Heart left ventricle (tissue), 16 donors: ENCODE measurements at regions of chr16 and their contacts with region 1.

Region 1: DNA sequence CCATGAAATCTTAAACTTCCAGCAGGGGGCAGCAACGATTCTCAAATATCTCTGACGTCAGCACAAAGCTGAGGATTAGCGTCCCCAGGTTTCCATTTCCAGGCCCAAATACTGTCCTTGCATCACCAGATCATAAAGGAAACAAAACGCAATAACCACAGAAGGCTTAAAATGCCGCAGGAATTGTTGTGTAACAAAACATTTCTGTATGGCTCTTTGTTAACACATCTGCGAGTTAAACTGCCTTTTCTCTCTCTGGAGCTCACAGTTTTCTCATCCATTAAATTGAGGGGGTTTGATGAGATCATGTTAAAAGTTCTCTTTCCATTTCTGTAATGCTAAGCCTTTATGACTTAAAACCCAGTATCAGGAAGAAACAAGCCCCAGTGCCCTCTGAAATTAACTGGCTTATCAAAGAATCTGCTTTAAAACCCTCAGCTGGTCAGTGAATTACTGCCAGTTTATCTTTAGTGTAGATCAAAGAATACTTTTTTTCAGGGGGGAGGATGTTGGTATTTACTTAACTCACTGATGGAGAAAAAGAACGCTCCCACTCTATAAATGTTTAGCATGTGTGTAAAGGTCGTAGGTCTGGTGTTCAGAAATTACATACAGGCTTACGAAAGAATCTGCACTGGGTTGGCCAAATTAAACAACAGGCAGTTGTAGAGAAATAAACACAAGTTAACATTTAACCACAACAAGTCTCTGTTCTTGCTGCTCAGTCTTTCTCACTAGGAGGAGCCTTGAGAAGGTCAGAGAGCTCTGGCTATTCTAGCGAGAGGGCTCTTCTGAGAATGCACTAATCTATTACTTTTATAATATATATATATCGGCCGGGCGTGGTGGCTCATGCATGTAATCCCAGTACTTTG is 10.6 kb upstream of the TERF2 start:
- DNase-seq: peak in 3 of 5 donors; percentile 61 to 76 (median 72)
- ATAC-seq: peak; percentile 29 to 55 (median 47)
- H3K4me3 ChIP-seq: no peak overlapping the region
- H3K27ac ChIP-seq: peak overlapping the region in 11 of 12 donors; percentile 47 to 86 (median 68)
- H3K4me1 ChIP-seq: peaks cover 0 to 34% (median 19%) of the 10 kb centered on the region in 12 donors
- H3K27me3 ChIP-seq: no peaks in the 10 kb centered on the region
- CTCF ChIP-seq: peak in 9 of 12 donors; percentile 54 to 83 (median 70)
- POLR2A ChIP-seq: no peak

Region 2: GRCh38 chr16:69424053-69424934 is 27.9 kb after region 1 on chr16 and contains the start of gene CYB5B:
- intact Hi-C with region 1: loop called in 2 of 10 experiments (anchors 2 kb)
- DNase-seq: peak; percentile 91 to 96 (median 95)
- ATAC-seq: peak; percentile 99 to 100 (median 99)
- H3K4me3 ChIP-seq: peak within 1 kb of the TSS; percentile 64 to 91 (median 76)
- H3K27ac ChIP-seq: peak within 1 kb of the TSS; percentile 54 to 86 (median 80)
- H3K4me1 ChIP-seq: peaks cover 0 to 17% (median 11%) of the 10 kb centered on the region in 12 donors
- H3K27me3 ChIP-seq: no peaks in the 10 kb centered on the region
- CTCF ChIP-seq: peak in 1 of 12 donors; percentile 3
- POLR2A ChIP-seq: peak in 1 of 2 donors; percentile 66
- total RNA-seq, gene CYB5B: 31.1 to 89.2 (median 65.0) TPM

Region 3: DNA sequence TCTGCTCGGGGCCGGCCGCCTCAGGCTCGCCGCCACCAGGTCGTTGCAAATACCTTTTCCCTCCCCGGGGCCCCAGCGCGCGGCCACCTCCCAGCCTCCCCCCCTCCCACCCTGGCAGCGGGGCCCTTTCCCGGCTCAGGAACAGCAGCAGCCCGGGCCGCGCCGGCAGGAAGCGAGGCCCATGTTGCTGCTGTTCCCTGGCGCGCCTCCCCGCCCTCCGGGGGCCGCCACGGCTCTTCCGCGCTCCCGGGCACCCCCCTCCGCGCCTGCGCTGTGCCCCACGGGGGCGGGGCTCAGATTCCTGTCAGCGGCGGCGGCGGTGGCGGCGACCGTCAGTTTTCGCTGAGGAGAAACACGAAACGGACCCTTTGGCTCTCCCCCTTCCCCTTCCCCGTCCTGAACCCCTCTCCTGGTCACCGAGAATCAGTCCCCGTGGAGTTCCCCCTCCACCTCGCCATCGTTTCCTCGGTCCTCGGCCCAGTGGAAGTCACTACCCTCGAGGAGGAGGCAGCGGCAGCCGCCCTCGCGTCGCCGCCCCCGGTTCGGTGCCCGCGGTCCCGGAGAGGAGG is 169.3 kb after region 1 on chr16 and contains the start of gene NFAT5:
- intact Hi-C with region 1: loop called in 9 of 10 experiments (anchors 2 to 5 kb)
- DNase-seq: peak; percentile 90 to 95 (median 90)
- ATAC-seq: peak; percentile 84 to 94 (median 90)
- H3K4me3 ChIP-seq: peak within 1 kb of the TSS; percentile 66 to 98 (median 94)
- H3K27ac ChIP-seq: peak within 1 kb of the TSS; percentile 88 to 100 (median 98)
- H3K4me1 ChIP-seq: peaks cover 0 to 55% (median 27%) of the 10 kb centered on the region in 12 donors
- H3K27me3 ChIP-seq: no peaks in the 10 kb centered on the region
- CTCF ChIP-seq: peak in 5 of 12 donors; percentile 17 to 33 (median 25)
- POLR2A ChIP-seq: peak in 1 of 2 donors; percentile 83
- total RNA-seq, gene NFAT5: 13.6 to 30.5 (median 23.9) TPM

Region 4: DNA sequence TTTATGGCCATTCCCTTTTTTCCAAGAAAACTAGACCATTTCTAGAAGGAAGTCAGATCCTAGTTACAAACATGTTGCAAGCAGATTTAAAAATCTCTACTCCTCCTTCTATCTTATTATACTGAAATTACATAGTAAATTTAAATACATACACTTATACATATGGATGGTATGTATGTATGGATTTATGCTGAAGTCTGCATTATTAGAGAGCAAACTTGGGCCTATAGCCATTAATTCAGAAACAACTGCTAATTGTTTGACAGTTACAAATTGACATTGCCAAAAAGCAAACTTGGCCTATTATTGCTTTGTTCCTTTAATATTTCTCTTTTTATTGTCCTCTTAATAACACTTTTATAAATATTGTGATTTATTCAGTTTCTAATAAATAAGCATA is 236.4 kb after region 1 on chr16:
- intact Hi-C with region 1: loop called in 2 of 10 experiments (anchors 10 kb)
- DNase-seq: no peak
- ATAC-seq: no peak
- H3K4me3 ChIP-seq: no peak overlapping the region
- H3K27ac ChIP-seq: no peak overlapping the region
- H3K4me1 ChIP-seq: no peaks in the 10 kb centered on the region
- H3K27me3 ChIP-seq: no peaks in the 10 kb centered on the region
- CTCF ChIP-seq: no peak
- POLR2A ChIP-seq: no peak

Region 5: DNA sequence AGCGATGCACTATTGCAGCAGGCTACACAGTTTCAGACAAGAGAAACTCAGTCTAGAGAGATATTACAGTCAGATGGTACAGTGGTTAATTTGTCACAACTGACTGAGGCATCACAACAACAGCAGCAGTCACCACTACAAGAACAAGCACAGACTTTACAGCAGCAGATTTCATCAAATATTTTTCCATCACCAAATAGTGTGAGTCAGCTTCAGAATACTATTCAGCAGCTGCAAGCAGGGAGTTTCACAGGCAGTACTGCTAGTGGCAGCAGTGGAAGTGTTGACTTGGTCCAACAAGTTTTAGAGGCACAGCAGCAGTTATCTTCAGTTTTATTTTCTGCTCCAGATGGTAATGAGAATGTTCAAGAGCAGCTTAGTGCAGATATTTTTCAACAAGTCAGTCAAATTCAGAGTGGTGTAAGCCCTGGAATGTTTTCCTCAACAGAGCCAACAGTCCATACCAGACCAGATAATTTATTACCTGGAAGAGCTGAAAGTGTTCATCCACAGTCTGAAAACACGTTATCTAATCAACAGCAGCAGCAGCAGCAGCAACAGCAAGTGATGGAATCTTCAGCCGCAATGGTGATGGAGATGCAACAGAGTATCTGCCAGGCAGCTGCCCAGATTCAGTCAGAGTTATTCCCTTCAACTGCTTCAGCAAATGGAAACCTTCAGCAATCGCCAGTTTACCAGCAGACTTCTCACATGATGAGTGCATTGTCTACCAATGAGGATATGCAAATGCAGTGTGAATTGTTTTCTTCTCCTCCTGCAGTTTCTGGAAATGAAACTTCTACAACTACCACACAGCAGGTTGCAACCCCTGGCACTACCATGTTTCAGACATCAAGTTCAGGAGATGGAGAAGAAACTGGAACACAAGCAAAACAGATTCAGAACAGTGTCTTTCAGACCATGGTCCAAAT is 295.8 kb after region 1 on chr16:
- intact Hi-C with region 1: loop called in 1 of 10 experiments (anchors 10 kb)
- DNase-seq: no peak
- ATAC-seq: peak in 3 of 4 donors; percentile 42 to 56 (median 43)
- H3K4me3 ChIP-seq: no peak overlapping the region
- H3K27ac ChIP-seq: no peak overlapping the region
- H3K4me1 ChIP-seq: no peaks in the 10 kb centered on the region
- H3K27me3 ChIP-seq: no peaks in the 10 kb centered on the region
- CTCF ChIP-seq: no peak
- POLR2A ChIP-seq: no peak

Region 6: GRCh38 chr16:69761983-69762813 is 365.8 kb after region 1 on chr16 and contains the start of gene WWP2:
- intact Hi-C with region 1: loop called in 4 of 10 experiments (anchors 5 to 10 kb)
- DNase-seq: peak; percentile 77 to 87 (median 80)
- ATAC-seq: peak; percentile 60 to 89 (median 86)
- H3K4me3 ChIP-seq: peak within 1 kb of the TSS; percentile 74 to 99 (median 90)
- H3K27ac ChIP-seq: peak within 1 kb of the TSS; percentile 67 to 92 (median 86)
- H3K4me1 ChIP-seq: peaks cover 0 to 20% (median 10%) of the 10 kb centered on the region in 12 donors
- H3K27me3 ChIP-seq: no peaks in the 10 kb centered on the region
- CTCF ChIP-seq: no peak
- POLR2A ChIP-seq: peak in 1 of 2 donors; percentile 50
- total RNA-seq, gene WWP2: 16.5 to 33.2 (median 24.0) TPM